HepG2 (cell line): ENCODE measurements at regions of chr12 and their contacts with region 1.

Region 1: GRCh38 chr12:32854097-32854496 is 42.5 kb downstream of the PKP2 start:
- DNase-seq: no peak
- ATAC-seq: no peak
- H3K4me3 ChIP-seq: no peak overlapping the region
- H3K27ac ChIP-seq: no peak overlapping the region
- H3K4me1 ChIP-seq: no peaks in the 10 kb centered on the region
- H3K27me3 ChIP-seq: no peaks in the 10 kb centered on the region
- CTCF ChIP-seq: no peak
- EP300 ChIP-seq: no peak
- POLR2A ChIP-seq: no peak
- RAD21 ChIP-seq: no peak

Region 2: DNA sequence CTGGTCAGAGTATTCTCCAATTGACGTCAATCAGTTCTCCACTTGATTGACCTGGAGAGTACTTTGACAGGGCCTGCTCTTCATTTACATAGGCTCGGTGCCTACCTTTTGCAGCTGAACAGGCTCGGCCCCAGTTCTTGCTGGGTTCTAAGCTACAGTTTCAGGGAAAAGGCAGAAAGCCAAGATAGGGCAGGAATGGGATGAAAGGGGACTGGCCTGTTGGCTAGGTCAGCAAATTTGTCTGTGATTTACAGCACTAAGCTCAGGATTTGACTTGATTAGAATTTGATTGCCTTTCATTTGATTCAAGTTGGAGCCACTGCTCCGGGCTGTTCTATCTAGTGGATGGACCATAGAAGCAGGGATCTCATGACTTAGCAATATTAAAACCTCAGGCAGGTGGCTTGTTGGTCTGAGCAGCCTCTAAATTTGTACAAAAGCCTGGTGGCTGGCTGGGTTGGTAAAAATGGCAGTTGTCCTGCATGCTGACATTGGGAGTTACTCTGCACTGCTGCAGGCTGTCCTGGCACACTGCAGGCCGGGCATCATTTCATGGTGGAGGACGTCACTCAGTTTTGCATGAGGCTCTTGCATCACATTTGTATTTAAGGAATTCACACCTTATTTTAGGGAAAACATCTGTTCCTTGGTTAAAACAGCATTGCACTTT is 675.6 kb before region 1 on chr12:
- CTCF ChIA-PET with region 1: no interaction called
- POLR2A ChIA-PET with region 1: no interaction called
- in situ Hi-C with region 1: no loop called
- intact Hi-C with region 1: no loop called
- DNase-seq: no peak
- ATAC-seq: no peak
- H3K4me3 ChIP-seq: no peak overlapping the region
- H3K27ac ChIP-seq: no peak overlapping the region
- H3K4me1 ChIP-seq: no peaks in the 10 kb centered on the region
- H3K27me3 ChIP-seq: no peaks in the 10 kb centered on the region
- CTCF ChIP-seq: no peak
- EP300 ChIP-seq: no peak
- POLR2A ChIP-seq: no peak
- RAD21 ChIP-seq: no peak

Region 3: GRCh38 chr12:32828552-32828951 is 25.5 kb before region 1 on chr12:
- CTCF ChIA-PET with region 1: no interaction called
- POLR2A ChIA-PET with region 1: no interaction called
- in situ Hi-C with region 1: no loop called
- intact Hi-C with region 1: no loop called
- DNase-seq: no peak
- ATAC-seq: no peak
- H3K4me3 ChIP-seq: no peak overlapping the region
- H3K27ac ChIP-seq: no peak overlapping the region
- H3K4me1 ChIP-seq: no peaks in the 10 kb centered on the region
- H3K27me3 ChIP-seq: no peaks in the 10 kb centered on the region
- CTCF ChIP-seq: no peak
- EP300 ChIP-seq: no peak
- POLR2A ChIP-seq: no peak
- RAD21 ChIP-seq: no peak

Region 4: GRCh38 chr12:32877601-32878459 is 23.7 kb after region 1 on chr12:
- CTCF ChIA-PET with region 1: no interaction called
- POLR2A ChIA-PET with region 1: no interaction called
- in situ Hi-C with region 1: no loop called
- intact Hi-C with region 1: no loop called
- DNase-seq: no peak
- ATAC-seq: no peak
- H3K4me3 ChIP-seq: no peak overlapping the region
- H3K27ac ChIP-seq: no peak overlapping the region
- H3K4me1 ChIP-seq: no peaks in the 10 kb centered on the region
- H3K27me3 ChIP-seq: no peaks in the 10 kb centered on the region; a peak in 1 of 5 replicates
- CTCF ChIP-seq: no peak
- EP300 ChIP-seq: no peak
- POLR2A ChIP-seq: no peak
- RAD21 ChIP-seq: no peak

Region 5: DNA sequence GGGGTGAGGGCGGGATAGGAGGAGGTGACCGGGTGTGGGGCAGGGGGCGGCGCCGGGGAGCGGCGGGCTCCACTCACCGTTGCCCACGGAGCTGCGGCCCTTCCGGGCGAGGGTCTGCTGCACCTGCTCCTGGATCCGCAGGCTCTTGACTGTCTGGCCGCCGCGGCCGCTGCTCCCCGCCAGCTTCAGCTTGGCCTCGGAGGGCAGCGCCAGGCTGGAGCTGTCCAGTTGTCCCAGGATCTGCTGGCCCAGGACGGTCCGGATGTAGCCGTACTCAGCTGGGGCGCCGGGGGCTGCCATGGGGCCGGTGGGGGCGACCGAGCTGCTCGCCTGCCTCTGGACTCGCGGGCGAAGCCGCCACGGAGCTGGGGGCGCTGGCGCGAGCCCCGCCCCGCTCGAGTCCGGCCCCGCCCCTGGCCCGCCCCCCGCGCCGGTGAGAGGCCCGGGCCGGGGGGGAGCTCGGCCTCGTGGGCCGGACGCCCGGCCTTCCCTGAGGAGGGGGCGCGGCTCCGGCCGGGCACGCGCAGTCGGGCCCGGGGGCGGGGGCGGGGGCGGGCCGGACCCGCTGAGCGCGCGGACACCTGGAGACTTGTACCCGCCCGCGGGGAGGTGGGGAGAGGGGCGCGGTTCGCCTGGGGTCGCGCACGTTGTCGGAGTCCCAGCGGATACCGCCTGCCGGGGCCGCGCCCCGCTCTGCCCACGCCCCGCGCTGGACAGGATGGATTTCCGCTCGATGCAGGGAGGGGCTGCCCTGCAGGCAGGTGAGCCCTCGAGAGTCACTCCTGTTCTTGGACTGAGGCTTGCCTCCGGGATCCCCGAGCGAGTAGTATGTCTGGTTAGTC is 42.6 kb after region 1 on chr12 and contains the start of gene PKP2:
- CTCF ChIA-PET with region 1: no interaction called
- POLR2A ChIA-PET with region 1: no interaction called
- in situ Hi-C with region 1: no loop called
- intact Hi-C with region 1: loop called (anchors 5 kb)
- DNase-seq: peak; percentile 80
- ATAC-seq: peak; percentile 82
- H3K4me3 ChIP-seq: peak within 1 kb of the TSS; percentile 78 to 98 (median 93)
- H3K27ac ChIP-seq: peak within 1 kb of the TSS; percentile 80
- H3K4me1 ChIP-seq: peaks cover 65% of the 10 kb centered on the region
- H3K27me3 ChIP-seq: no peaks in the 10 kb centered on the region
- CTCF ChIP-seq: no peak; the same call in 1 of the 2 replicates
- EP300 ChIP-seq: no peak
- POLR2A ChIP-seq: peak; percentile 53 to 71
- RAD21 ChIP-seq: peak; percentile 15; the same call in 1 of the 2 replicates
- total RNA-seq, gene PKP2: 25.3 and 27.5 TPM in 2 replicates